Astrocyte of the cerebellum (primary cell): ENCODE measurements at regions of chr2 and their contacts with region 1.

Region 1: DNA sequence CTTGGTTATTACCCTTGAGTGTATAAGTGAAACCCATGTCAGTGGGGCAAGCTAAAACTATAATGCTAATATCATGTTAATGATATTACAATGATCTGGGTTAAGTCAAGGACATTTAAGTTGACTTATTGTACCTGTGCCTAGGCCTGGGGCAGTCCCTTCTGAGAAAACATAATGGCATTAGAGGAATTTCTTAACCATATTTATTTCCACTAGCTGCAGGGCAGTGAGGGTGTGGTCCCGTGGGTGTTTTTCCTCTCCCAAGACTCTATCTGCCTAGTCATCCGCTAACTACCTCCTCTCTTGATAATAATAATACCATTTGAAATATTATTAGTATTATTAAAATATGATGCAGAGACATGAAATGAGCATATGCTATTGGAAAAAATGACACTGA is 1508.2 kb upstream of the SLC39A10 start:
- DNase-seq: no peak
- H3K4me3 ChIP-seq: no peak overlapping the region
- CTCF ChIP-seq: no peak

Region 2: GRCh38 chr2:193701484-193701883 is 447.3 kb before region 1 on chr2:
- in situ Hi-C with region 1: no loop called
- DNase-seq: no peak
- H3K4me3 ChIP-seq: no peak overlapping the region
- CTCF ChIP-seq: no peak

Region 3: GRCh38 chr2:194104687-194105086 is 44.1 kb before region 1 on chr2:
- in situ Hi-C with region 1: no loop called
- DNase-seq: no peak
- H3K4me3 ChIP-seq: no peak overlapping the region
- CTCF ChIP-seq: no peak

Region 4: DNA sequence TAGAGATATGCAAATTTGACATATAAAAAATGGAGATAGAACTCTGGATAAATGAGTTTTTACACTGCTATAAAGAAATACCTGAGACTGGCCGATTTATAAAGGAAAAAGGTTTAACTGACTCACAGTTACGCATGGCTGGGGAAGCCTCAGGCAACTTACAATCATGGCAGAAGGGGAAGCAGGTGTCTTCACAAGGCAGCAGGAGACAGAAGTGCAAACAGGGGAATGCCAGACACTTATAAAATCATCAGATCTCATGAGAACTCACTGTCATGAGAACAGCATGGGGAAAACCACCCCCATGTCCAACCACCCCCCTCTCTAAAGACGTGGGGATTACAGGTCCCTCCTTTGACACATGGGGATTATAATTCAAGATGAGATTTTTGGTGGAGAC is 31.9 kb before region 1 on chr2:
- in situ Hi-C with region 1: no loop called
- DNase-seq: no peak
- H3K4me3 ChIP-seq: no peak overlapping the region
- CTCF ChIP-seq: no peak

Region 5: DNA sequence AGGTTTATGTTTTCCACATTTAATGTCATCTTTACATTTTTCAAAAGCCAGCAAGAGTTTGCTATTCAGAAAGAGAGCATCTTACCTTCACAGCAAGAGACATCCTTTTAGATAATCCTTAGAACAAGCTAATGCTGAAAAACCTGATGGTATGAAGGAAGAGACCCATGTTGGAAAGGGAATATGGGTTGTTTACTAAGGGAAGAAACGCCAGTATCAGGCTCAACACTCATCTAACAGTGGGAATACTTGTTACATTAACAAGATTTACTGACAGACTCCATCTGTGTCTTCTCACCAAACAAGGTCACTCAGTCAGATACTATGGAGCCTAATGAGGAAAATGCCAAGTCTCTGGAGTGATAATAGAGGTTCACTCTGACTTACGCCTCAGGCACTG is 34.1 kb after region 1 on chr2:
- in situ Hi-C with region 1: loop called (anchors 5 kb)
- DNase-seq: no peak
- H3K4me3 ChIP-seq: no peak overlapping the region
- CTCF ChIP-seq: no peak

Region 6: DNA sequence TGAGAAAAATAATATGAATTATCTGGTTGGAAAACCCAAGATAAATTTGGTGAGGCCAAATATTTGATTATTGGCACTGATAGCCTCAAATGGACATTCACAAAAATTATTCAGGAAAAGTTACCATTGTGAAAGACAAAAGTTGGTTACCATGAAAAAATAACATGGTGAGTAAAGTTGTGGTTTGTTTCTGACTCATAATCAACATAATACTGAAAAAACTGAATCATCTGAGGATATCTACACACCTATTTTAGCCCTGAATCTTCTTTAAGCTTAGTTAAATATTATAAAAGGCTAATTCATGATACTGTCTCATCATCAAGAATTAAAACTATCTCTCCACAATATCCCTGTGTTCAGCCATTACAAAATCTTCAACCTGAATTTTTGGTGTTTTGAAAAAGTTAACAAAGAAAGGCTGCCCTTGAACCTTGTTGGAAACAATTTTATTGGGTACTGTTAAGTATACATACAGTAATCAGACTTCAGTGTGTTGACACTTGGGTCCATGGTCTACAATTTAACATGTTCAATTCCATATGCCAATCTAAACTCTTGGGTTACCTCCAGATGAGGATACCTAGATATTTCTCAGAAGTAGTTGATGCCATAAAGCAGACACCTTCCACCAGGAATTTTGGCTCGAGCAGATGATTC is 900.7 kb after region 1 on chr2:
- in situ Hi-C with region 1: no loop called
- DNase-seq: peak; percentile 12
- H3K4me3 ChIP-seq: no peak overlapping the region
- CTCF ChIP-seq: no peak